Mammary epithelial cell (primary cell): ENCODE measurements at regions of chr7 and their contacts with region 1.

Region 1: DNA sequence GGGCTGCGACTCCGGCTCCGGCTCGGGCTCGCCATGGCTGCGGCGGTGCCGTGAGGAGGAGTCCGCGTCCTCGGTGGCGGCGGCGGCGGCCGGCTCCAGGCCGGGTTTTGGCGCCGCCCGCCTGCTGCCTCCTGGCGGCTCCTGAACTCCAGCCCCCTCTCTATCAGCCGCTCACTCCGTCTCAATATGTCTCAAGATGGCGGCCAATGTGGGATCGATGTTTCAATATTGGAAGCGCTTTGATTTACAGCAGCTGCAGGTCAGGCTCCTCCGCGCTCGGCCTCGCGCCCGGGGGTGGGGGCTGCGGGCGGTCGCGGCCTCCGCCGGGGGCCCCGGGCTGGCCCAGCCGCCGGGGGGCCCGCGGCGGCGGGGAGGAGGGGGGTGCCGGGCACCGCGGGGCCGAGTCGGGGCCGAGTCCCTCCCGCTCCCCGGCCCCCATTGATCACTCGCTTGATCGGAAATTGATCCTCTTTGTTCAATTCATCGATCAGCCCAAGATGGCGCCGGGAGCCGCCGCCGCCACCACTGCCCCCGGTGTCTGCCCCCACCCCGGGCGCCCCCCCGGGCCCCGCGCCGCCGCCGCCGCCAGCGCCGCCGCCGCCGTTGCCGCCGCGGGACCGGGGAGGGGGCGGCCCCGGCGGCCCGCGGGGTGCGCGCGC is 1.5 kb upstream of the CUX1 start:
- DNase-seq: peak; percentile 75
- H3K4me3 ChIP-seq: peak overlapping the region; percentile 48 to 70 (median 68)
- H3K27ac ChIP-seq: peak overlapping the region; percentile 48
- H3K4me1 ChIP-seq: peaks cover 16% of the 10 kb centered on the region
- H3K27me3 ChIP-seq: no peaks in the 10 kb centered on the region
- CTCF ChIP-seq: peak in 1 of 2 donors; percentile 32

Region 2: GRCh38 chr7:101457007-101457755 is 358.8 kb before region 1 on chr7:
- CTCF ChIA-PET with region 1: no interaction called
- dilution Hi-C with region 1: no loop called
- in situ Hi-C with region 1: no loop called
- intact Hi-C with region 1: no loop called
- DNase-seq: no peak
- H3K4me3 ChIP-seq: no peak overlapping the region
- H3K27ac ChIP-seq: no peak overlapping the region
- H3K4me1 ChIP-seq: no peaks in the 10 kb centered on the region
- H3K27me3 ChIP-seq: no peaks in the 10 kb centered on the region
- CTCF ChIP-seq: no peak

Region 3: GRCh38 chr7:101602484-101603241 is 213.3 kb before region 1 on chr7:
- CTCF ChIA-PET with region 1: no interaction called
- dilution Hi-C with region 1: no loop called
- in situ Hi-C with region 1: loop called in 1 of 2 experiments (anchors 25 kb)
- intact Hi-C with region 1: loop called (anchors 1 kb)
- DNase-seq: peak; percentile 55
- H3K4me3 ChIP-seq: no peak overlapping the region
- H3K27ac ChIP-seq: no peak overlapping the region
- H3K4me1 ChIP-seq: peaks cover 12% of the 10 kb centered on the region
- H3K27me3 ChIP-seq: no peaks in the 10 kb centered on the region
- CTCF ChIP-seq: peak; percentile 65 to 97

Region 4: DNA sequence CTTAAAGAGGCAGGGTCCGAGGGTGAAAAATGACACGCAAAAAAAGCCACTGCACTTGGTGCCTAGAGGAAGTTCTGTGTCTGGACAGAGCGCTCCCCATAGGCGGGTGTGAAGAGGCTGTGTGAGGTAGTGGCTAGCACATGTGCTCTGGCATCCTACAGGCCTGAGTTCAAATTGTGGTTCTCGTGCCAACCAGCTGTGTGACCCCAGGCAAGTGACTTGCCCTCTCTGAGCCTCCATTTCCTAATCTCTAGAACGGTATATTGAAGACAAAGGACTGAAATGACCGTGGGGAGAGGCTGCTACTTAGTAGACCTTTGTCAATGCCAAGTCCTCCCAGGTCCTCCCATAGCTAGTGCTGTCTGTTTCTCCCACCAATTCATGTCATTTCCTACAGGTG is 107.7 kb before region 1 on chr7:
- CTCF ChIA-PET with region 1: interaction called, 13 read pairs
- dilution Hi-C with region 1: no loop called
- in situ Hi-C with region 1: no loop called
- intact Hi-C with region 1: no loop called
- DNase-seq: no peak
- H3K4me3 ChIP-seq: no peak overlapping the region
- H3K27ac ChIP-seq: no peak overlapping the region
- H3K4me1 ChIP-seq: no peaks in the 10 kb centered on the region
- H3K27me3 ChIP-seq: peaks cover 13% of the 10 kb centered on the region
- CTCF ChIP-seq: no peak

Region 5: GRCh38 chr7:101792051-101792681 is 23.8 kb before region 1 on chr7:
- CTCF ChIA-PET with region 1: no interaction called
- dilution Hi-C with region 1: no loop called
- in situ Hi-C with region 1: no loop called
- intact Hi-C with region 1: loop called (anchors 2 kb)
- DNase-seq: peak; percentile 93
- H3K4me3 ChIP-seq: peak overlapping the region in 1 of 3 experiments; percentile 41
- H3K27ac ChIP-seq: peak overlapping the region; percentile 97
- H3K4me1 ChIP-seq: peaks cover 6% of the 10 kb centered on the region
- H3K27me3 ChIP-seq: no peaks in the 10 kb centered on the region
- CTCF ChIP-seq: no peak

Region 6: DNA sequence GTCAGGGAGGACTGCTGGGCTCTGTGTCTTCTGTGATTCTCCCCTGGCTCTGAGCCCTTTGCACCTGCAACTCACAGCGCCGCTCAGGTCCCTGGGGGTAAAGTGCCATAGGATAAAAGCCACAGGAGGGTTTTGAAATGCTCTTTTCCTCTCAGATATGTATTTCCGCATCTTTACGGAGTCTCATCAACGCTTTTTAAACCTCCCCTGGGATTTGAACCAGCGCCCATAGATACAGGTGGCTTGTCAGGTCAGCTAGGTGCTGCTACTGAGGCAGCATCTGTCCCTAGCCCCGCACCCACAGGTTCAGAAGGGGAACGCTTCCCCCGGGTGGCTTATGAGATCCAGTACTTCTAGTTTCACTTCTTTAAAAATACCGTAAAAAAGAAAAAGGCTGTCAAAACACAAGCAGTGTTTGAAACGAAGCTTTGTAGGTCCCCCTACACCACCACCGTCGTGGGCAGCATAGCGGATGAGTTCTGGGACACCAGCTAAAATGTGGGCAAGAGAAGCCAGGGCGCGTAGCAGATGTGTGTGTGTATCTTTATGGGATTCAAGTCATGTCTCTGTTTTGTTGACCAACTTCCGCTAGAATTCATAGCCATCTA is 175.0 kb after region 1 on chr7:
- CTCF ChIA-PET with region 1: no interaction called
- dilution Hi-C with region 1: no loop called
- in situ Hi-C with region 1: no loop called
- intact Hi-C with region 1: no loop called
- DNase-seq: no peak
- H3K4me3 ChIP-seq: no peak overlapping the region
- H3K27ac ChIP-seq: no peak overlapping the region
- H3K4me1 ChIP-seq: no peaks in the 10 kb centered on the region
- H3K27me3 ChIP-seq: no peaks in the 10 kb centered on the region
- CTCF ChIP-seq: no peak

Region 7: GRCh38 chr7:102061981-102062390 is 246.0 kb after region 1 on chr7:
- CTCF ChIA-PET with region 1: no interaction called
- dilution Hi-C with region 1: no loop called
- in situ Hi-C with region 1: no loop called
- intact Hi-C with region 1: loop called (anchors 10 kb)
- DNase-seq: no peak
- H3K4me3 ChIP-seq: no peak overlapping the region
- H3K27ac ChIP-seq: no peak overlapping the region
- H3K4me1 ChIP-seq: peaks cover 23% of the 10 kb centered on the region
- H3K27me3 ChIP-seq: no peaks in the 10 kb centered on the region
- CTCF ChIP-seq: no peak

Region 8: DNA sequence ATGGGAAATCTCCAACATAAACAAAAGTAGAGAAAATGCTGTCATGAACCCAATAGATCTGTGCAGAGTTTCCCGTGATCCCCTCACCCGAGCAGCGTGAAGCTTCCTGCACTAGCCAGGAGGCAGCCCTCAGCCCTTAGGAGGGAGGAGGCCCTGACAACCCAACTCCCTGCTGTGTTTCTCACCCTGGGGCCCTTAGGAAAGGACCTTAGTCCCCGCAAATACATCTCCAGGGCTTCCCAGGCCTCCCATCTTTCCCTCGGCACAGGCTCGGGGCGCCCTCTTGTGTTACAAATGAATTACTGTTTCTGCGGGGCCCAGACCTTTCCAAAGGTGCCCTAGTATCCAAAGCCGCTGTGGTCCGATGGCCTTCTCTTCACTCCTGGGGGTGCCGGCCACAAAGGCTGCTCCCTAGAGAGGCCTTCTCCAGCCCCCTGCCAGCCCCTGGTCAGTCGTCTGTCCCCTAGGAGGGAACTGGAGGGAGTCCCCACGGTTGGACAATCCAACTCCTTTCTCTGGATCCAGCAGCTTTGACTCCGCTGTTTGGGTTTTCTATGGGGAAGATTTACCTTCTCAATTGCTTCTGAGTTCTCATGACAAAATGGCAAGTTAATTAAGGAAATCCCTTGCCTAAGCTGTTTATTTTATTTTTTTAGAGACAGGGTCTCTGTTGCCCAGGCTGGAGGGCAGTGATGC is 420.8 kb after region 1 on chr7:
- CTCF ChIA-PET with region 1: no interaction called
- dilution Hi-C with region 1: no loop called
- in situ Hi-C with region 1: no loop called
- intact Hi-C with region 1: loop called (anchors 1 kb)
- DNase-seq: peak; percentile 44
- H3K4me3 ChIP-seq: no peak overlapping the region
- H3K27ac ChIP-seq: no peak overlapping the region
- H3K4me1 ChIP-seq: no peaks in the 10 kb centered on the region
- H3K27me3 ChIP-seq: no peaks in the 10 kb centered on the region
- CTCF ChIP-seq: peak; percentile 78 to 87